B cell (primary cell): ENCODE measurements at regions of chr9 and their contacts with region 1.

Region 1: GRCh38 chr9:95127249-95128176 is 190.0 kb downstream of the FANCC start:
- DNase-seq: peak; percentile 66
- ATAC-seq: peak; percentile 89
- H3K4me3 ChIP-seq: no peak overlapping the region
- H3K4me3 Mint-ChIP-seq: no peak overlapping the region
- H3K27ac ChIP-seq: no peak overlapping the region
- H3K27ac Mint-ChIP-seq: no peak overlapping the region
- H3K4me1 ChIP-seq: peaks cover 0 to 5% of the 10 kb centered on the region in 2 donors
- H3K4me1 Mint-ChIP-seq: peaks cover 2% of the 10 kb centered on the region
- H3K27me3 ChIP-seq: no peaks in the 10 kb centered on the region
- H3K27me3 Mint-ChIP-seq: no peaks in the 10 kb centered on the region
- CTCF ChIP-seq: peak; percentile 86

Region 2: DNA sequence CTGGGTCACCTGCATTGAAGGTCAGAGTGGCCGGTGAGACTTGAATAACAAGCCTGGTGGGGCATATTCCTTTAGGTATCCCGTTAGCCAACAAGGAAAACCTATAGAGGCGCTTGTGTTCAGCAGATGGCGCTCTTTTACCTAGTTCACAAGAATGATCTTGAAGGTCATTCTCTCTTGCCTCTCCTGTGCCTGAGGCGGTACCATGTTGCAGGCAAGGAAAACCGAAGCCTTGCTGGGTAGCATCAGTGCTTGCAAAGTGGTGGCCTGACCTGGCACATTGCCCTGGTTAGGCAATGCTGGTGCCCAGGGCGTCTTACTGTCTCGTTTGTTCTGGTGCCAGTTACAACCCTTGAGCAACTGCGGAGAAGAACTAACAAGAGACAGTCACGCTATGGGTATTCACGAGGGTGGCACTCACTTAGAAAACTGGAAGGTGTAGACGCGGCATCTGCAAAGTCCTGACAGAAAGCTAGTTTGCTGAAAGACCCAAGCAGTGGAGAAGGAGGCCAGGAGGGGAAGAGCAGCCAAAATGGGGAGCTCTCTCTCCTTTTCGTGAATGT is 344.3 kb before region 1 on chr9:
- CTCF ChIA-PET with region 1: interaction called, 72 read pairs
- POLR2A ChIA-PET with region 1: no interaction called
- intact Hi-C with region 1: no loop called
- DNase-seq: peak; percentile 53
- ATAC-seq: peak; percentile 47
- H3K4me3 ChIP-seq: no peak overlapping the region
- H3K4me3 Mint-ChIP-seq: no peak overlapping the region
- H3K27ac ChIP-seq: no peak overlapping the region
- H3K27ac Mint-ChIP-seq: no peak overlapping the region
- H3K4me1 ChIP-seq: no peaks in the 10 kb centered on the region
- H3K4me1 Mint-ChIP-seq: peaks cover 7% of the 10 kb centered on the region
- H3K27me3 ChIP-seq: no peaks in the 10 kb centered on the region
- H3K27me3 Mint-ChIP-seq: no peaks in the 10 kb centered on the region
- CTCF ChIP-seq: peak; percentile 59

Region 3: DNA sequence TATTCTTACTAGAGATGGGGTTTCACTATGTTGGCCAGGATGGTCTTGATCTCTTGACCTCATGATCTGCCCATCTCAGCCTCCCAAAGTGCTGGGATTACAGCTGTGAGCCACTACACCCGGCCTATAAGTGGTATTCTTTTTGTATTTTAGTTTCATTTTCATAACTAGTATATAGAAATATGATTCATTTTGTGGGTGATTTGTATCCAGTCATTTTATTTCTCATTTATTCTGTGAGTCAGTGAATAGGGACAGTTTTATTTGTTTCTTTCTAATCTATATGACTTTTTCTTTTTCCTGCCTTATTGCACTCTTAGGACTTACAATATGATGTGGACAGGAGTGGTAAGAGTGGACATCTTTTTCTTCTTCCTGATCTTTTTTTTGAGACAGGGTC is 288.1 kb before region 1 on chr9:
- CTCF ChIA-PET with region 1: no interaction called
- POLR2A ChIA-PET with region 1: no interaction called
- intact Hi-C with region 1: no loop called
- DNase-seq: no peak
- ATAC-seq: no peak
- H3K4me3 ChIP-seq: no peak overlapping the region
- H3K4me3 Mint-ChIP-seq: no peak overlapping the region
- H3K27ac ChIP-seq: no peak overlapping the region
- H3K27ac Mint-ChIP-seq: no peak overlapping the region
- H3K4me1 ChIP-seq: no peaks in the 10 kb centered on the region
- H3K4me1 Mint-ChIP-seq: no peaks in the 10 kb centered on the region
- H3K27me3 ChIP-seq: no peaks in the 10 kb centered on the region
- H3K27me3 Mint-ChIP-seq: no peaks in the 10 kb centered on the region
- CTCF ChIP-seq: no peak

Region 4: GRCh38 chr9:95116003-95116807 is 11.3 kb before region 1 on chr9:
- CTCF ChIA-PET with region 1: interaction called, 13 read pairs
- POLR2A ChIA-PET with region 1: no interaction called
- intact Hi-C with region 1: no loop called
- DNase-seq: no peak
- ATAC-seq: no peak
- H3K4me3 ChIP-seq: no peak overlapping the region
- H3K4me3 Mint-ChIP-seq: no peak overlapping the region
- H3K27ac ChIP-seq: no peak overlapping the region
- H3K27ac Mint-ChIP-seq: no peak overlapping the region
- H3K4me1 ChIP-seq: no peaks in the 10 kb centered on the region
- H3K4me1 Mint-ChIP-seq: no peaks in the 10 kb centered on the region
- H3K27me3 ChIP-seq: no peaks in the 10 kb centered on the region
- H3K27me3 Mint-ChIP-seq: no peaks in the 10 kb centered on the region
- CTCF ChIP-seq: no peak

Region 5: GRCh38 chr9:95167998-95168397 is 40.5 kb after region 1 on chr9:
- CTCF ChIA-PET with region 1: interaction called, 12 read pairs
- POLR2A ChIA-PET with region 1: no interaction called
- intact Hi-C with region 1: no loop called
- DNase-seq: peak; percentile 52
- ATAC-seq: peak; percentile 33
- H3K4me3 ChIP-seq: no peak overlapping the region
- H3K4me3 Mint-ChIP-seq: no peak overlapping the region
- H3K27ac ChIP-seq: no peak overlapping the region
- H3K27ac Mint-ChIP-seq: no peak overlapping the region
- H3K4me1 ChIP-seq: no peaks in the 10 kb centered on the region
- H3K4me1 Mint-ChIP-seq: no peaks in the 10 kb centered on the region
- H3K27me3 ChIP-seq: no peaks in the 10 kb centered on the region
- H3K27me3 Mint-ChIP-seq: no peaks in the 10 kb centered on the region
- CTCF ChIP-seq: peak; percentile 79